ENCODE measurements at regions of chr12 and their contacts with region 1.

Region 1: GRCh38 chr12:69211160-69211559 is 28.2 kb upstream of the CPSF6 start:
- DNase-seq: no peak
- ATAC-seq: no peak

Region 2: GRCh38 chr12:69269736-69270135 is 58.6 kb after region 1 on chr12:
- intact Hi-C with region 1: loop called (anchors 2 kb)
- DNase-seq: no peak
- ATAC-seq: no peak

Region 3: GRCh38 chr12:69779928-69780327 is 568.8 kb after region 1 on chr12:
- intact Hi-C with region 1: no loop called
- DNase-seq: no peak
- ATAC-seq: no peak

Measured in sciatic nerve (tissue), 2 donors.